A549 (cell line): ENCODE measurements at regions of chr16 and their contacts with region 1.

Region 1: GRCh38 chr16:69105489-69106361 is at the start of gene HAS3:
- DNase-seq: peak; percentile 81 to 84
- ATAC-seq: peak; percentile 80 to 85
- H3K4me3 ChIP-seq: peak within 1 kb of the TSS; percentile 91
- H3K27ac ChIP-seq: peak within 1 kb of the TSS; percentile 88 to 94
- H3K4me1 ChIP-seq: peaks cover 28% of the 10 kb centered on the region
- CTCF ChIP-seq: peak; percentile 68
- EP300 ChIP-seq: no peak
- POLR2A ChIP-seq: peak; percentile 98
- RAD21 ChIP-seq: peak; percentile 89 to 90
- polyA plus RNA-seq, gene HAS3: 9.1 and 11.1 TPM in 2 replicates

Region 2: DNA sequence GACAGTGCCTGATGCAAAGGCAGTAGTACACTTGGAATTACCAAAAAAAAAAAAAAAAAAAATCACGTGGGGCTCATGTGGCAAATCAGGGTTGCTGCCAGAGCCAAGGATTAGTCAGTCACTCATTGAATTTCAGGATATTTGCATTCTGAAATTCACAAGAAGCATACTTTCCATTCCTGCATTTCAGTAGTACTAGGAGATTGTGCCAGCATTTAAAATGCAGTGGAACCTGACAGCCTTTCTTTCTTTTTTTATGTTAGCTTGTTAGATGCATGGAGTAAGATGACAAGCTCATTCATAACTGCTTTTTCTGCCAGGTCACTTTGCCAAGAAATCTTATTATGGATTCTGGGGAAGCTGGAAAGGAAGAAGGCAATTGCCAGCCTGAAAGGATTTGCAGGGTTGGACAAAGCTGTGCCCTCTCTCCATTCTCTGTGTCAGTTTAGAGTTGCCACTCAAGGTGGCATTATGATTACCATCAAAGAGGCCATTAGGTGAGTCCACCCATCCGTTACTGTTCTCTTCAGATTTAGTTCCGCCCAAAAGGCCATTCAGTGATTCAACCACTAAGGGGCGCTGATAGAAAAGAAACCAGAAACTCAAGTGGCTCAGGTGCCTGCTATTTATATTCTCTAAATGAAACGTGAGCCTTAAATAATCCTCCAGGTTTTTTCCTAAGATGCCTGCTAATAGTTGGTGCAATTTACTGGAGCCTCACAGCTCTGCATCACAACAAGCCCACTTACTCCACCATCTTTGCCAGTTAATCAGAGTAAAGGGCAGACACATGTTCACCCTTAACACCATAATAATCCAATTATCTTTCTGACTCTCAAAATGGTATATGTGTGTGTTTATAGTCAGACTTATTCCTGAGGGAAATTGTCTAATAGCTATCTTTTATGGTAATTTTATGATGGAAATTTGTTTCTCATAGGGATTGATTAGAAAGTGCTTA is 203.4 kb before region 1 on chr16:
- CTCF ChIA-PET with region 1: interaction called, 503 read pairs
- POLR2A ChIA-PET with region 1: no interaction called
- DNase-seq: peak; percentile 58 to 68
- ATAC-seq: peak; percentile 87 to 91
- H3K4me3 ChIP-seq: no peak overlapping the region
- H3K27ac ChIP-seq: peak overlapping the region in 1 of 2 experiments; percentile 38; a peak in 3 of 6 replicates
- H3K4me1 ChIP-seq: peaks cover 12% of the 10 kb centered on the region
- CTCF ChIP-seq: peak; percentile 96
- EP300 ChIP-seq: no peak
- POLR2A ChIP-seq: no peak
- RAD21 ChIP-seq: peak; percentile 96 to 97

Region 3: DNA sequence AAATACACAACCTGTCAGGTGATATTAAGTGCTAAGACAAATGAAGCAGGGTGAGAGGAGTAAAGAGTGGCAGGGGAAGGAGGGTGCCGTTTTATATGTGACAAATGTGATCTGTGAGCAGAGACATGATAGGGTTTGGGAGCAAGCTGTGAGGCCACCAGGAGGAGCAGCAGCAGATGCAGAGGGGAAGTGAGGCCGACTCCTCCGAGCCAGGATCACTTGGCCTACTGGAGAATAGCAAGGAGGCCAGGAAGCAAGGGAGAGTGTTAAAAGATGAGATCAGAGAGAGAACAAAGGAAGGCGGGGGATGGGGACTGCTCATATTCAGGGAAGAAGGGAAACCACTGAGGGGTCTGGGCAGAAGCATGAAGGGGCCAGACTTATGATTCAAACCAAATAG is 133.0 kb before region 1 on chr16:
- CTCF ChIA-PET with region 1: interaction called, 15 read pairs
- POLR2A ChIA-PET with region 1: no interaction called
- DNase-seq: peak; percentile 45 to 71
- ATAC-seq: peak; percentile 95 to 97
- H3K4me3 ChIP-seq: no peak overlapping the region
- H3K27ac ChIP-seq: peak overlapping the region; percentile 12 to 62; a peak in 5 of 6 replicates
- H3K4me1 ChIP-seq: peaks cover 20% of the 10 kb centered on the region
- CTCF ChIP-seq: peak; percentile 34; the same call in 2 of the 3 replicates
- EP300 ChIP-seq: no peak
- POLR2A ChIP-seq: no peak
- RAD21 ChIP-seq: peak; percentile 52 to 64

Region 4: DNA sequence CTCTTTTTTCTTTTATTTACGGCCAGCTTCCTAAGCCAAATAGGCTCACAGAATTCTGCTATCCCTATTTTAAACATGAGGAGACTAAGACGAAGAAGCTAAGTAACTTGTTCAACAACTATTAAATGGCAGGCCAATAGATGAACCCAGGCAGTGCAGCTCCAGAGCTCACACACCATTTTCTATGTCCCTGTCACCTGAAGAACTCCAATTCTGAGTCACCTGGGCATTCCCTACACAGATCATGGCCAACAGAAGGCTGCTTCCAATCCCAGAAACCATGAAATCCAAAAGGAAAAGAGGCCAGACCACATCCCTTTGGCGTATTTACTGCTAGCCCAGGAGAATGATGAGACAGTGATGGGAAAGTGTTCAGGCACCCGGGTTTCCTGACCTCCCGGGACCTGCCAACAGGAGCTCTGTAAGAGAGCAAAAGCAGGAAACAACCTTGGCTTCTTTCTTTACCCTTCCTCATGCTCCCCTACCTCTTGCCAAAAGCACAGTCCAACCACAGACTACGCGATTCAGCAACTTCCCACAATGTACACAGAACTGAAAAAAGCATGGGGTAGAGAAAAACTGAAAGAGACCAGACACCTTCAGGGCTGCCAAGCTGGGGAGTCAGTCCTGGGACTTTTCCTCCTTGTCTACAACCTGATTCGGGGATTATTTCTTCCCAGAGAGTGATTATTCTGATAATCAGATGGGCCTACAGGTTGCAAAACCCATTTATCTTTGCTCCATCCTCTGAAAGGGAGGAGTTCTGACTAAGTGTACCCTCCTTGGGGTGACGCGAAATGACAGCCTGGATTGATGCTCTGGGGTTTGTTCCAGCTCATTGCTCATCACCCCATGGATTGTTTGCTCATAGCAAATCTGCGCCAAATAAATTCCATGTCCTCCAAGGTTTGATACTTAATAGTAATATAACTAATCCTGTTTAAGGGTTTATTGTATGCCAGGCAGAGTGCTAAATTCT is 48.0 kb before region 1 on chr16:
- CTCF ChIA-PET with region 1: interaction called, 16 read pairs
- POLR2A ChIA-PET with region 1: interaction called, 10 read pairs
- DNase-seq: peak; percentile 92 to 95
- ATAC-seq: peak; percentile 93 to 99
- H3K4me3 ChIP-seq: no peak overlapping the region
- H3K27ac ChIP-seq: peak overlapping the region; percentile 94 to 96
- H3K4me1 ChIP-seq: peaks cover 59% of the 10 kb centered on the region
- CTCF ChIP-seq: no peak
- EP300 ChIP-seq: peak; percentile 83 to 86; a peak in 4 of 5 replicates
- POLR2A ChIP-seq: no peak
- RAD21 ChIP-seq: peak in 1 of 2 experiments; percentile 43; a peak in 1 of 5 replicates

Region 5: DNA sequence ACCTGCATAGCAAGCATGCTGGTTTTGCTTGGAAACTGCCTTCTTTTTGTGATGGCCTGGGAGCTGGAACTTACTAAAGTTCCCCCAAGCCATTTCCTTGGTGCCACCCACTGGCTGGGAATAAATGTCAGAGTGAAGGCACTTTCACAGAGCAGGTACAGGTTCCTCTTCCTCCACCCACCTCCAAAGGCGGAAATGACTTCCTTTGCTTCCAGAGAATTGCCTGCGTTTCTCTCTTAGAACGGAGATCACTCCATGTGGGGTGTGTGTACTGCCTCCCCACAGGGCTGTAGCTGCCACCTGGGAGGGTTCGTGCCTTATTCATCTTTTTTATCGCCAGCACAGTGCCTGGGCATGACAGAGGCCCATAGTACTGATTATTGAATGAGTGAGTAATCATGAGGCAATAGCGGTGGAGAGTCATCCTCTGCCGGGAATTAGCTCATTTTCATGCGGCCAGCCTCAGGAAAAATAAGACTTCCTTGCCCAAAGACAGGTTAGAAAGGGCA is 32.5 kb before region 1 on chr16:
- CTCF ChIA-PET with region 1: interaction called, 18 read pairs
- POLR2A ChIA-PET with region 1: interaction called, 9 read pairs
- DNase-seq: peak; percentile 64 to 87
- ATAC-seq: peak; percentile 94 to 96
- H3K4me3 ChIP-seq: 0 out of 3 replicates have a peak overlapping the region, but pooled peaks have one; percentile 1
- H3K27ac ChIP-seq: peak overlapping the region; percentile 89
- H3K4me1 ChIP-seq: peaks cover 66% of the 10 kb centered on the region
- CTCF ChIP-seq: no peak; the same call in 2 of the 3 replicates
- EP300 ChIP-seq: peak; percentile 80 to 89; a peak in 3 of 5 replicates
- POLR2A ChIP-seq: no peak
- RAD21 ChIP-seq: peak; percentile 25 to 63; a peak in 4 of 5 replicates

Region 6: GRCh38 chr16:69089091-69089910 is 16.4 kb before region 1 on chr16:
- CTCF ChIA-PET with region 1: interaction called, 24 read pairs
- POLR2A ChIA-PET with region 1: interaction called, 4 read pairs
- DNase-seq: peak in 1 of 2 experiments; percentile 35
- ATAC-seq: peak; percentile 90 to 93
- H3K4me3 ChIP-seq: no peak overlapping the region
- H3K27ac ChIP-seq: peak overlapping the region; percentile 55 to 78
- H3K4me1 ChIP-seq: peaks cover 19% of the 10 kb centered on the region
- CTCF ChIP-seq: no peak
- EP300 ChIP-seq: no peak
- POLR2A ChIP-seq: no peak
- RAD21 ChIP-seq: no peak